Activated CD8-positive, alpha-beta T cell treated with anti-CD3 and anti-CD28 coated beads, Interleukin-2, amount 10 ng/mL, durations not matched to agents 7 days and 5 days (primary cell): ENCODE measurements at regions of chr17 and their contacts with region 1.

Region 1: DNA sequence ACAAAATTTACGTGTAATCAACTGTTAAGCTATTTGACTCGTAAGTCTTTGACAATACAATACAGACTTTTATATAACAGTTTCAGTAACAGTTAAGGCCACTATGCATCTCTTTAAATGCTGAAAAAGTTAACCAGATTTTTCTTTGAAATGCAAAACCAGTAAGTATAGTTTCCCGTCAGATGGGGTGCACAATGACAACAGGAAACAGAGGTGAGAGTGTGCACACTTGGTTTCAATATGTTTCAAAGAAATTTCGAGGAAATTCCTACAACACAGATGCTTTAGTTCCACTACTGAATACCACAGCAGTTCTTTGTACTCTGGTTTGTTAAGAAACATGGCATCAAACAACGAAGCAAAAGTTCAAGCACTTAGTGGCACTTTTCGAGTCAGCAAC is 48.4 kb downstream of the RNF157 start:
- DNase-seq: peak; percentile 78
- ATAC-seq: peak; percentile 85
- H3K4me3 Mint-ChIP-seq: peak overlapping the region; percentile 73
- H3K27ac Mint-ChIP-seq: peak overlapping the region; percentile 97
- H3K4me1 Mint-ChIP-seq: peaks cover 89% of the 10 kb centered on the region
- H3K27me3 Mint-ChIP-seq: no peaks in the 10 kb centered on the region

Region 2: GRCh38 chr17:76088036-76088867 is 103.6 kb before region 1 on chr17:
- CTCF ChIA-PET with region 1: no interaction called
- POLR2A ChIA-PET with region 1: no interaction called
- DNase-seq: no peak
- ATAC-seq: no peak
- H3K4me3 Mint-ChIP-seq: no peak overlapping the region
- H3K27ac Mint-ChIP-seq: no peak overlapping the region
- H3K4me1 Mint-ChIP-seq: peaks cover 2% of the 10 kb centered on the region
- H3K27me3 Mint-ChIP-seq: no peaks in the 10 kb centered on the region

Region 3: GRCh38 chr17:76141212-76142038 is 50.5 kb before region 1 on chr17 and contains the start of gene FOXJ1:
- CTCF ChIA-PET with region 1: interaction called, 6 read pairs
- POLR2A ChIA-PET with region 1: interaction called, 20 read pairs
- DNase-seq: peak; percentile 94
- ATAC-seq: peak; percentile 55
- H3K4me3 Mint-ChIP-seq: peak within 1 kb of the TSS; percentile 76
- H3K27ac Mint-ChIP-seq: peak within 1 kb of the TSS; percentile 97
- H3K4me1 Mint-ChIP-seq: peaks cover 72% of the 10 kb centered on the region
- H3K27me3 Mint-ChIP-seq: no peaks in the 10 kb centered on the region
- total RNA-seq, gene FOXJ1: 8.7 to 9.1 TPM

Region 4: GRCh38 chr17:76208120-76208519 is 16.2 kb after region 1 on chr17:
- CTCF ChIA-PET with region 1: interaction called, 12 read pairs
- POLR2A ChIA-PET with region 1: interaction called, 46 read pairs
- DNase-seq: peak; percentile 50
- ATAC-seq: peak; percentile 67
- H3K4me3 Mint-ChIP-seq: peak overlapping the region; percentile 15
- H3K27ac Mint-ChIP-seq: peak overlapping the region; percentile 74
- H3K4me1 Mint-ChIP-seq: peaks cover 75% of the 10 kb centered on the region
- H3K27me3 Mint-ChIP-seq: no peaks in the 10 kb centered on the region

Region 5: GRCh38 chr17:76246080-76247066 is 54.5 kb after region 1 on chr17:
- CTCF ChIA-PET with region 1: interaction called, 20 read pairs
- POLR2A ChIA-PET with region 1: interaction called, 66 read pairs
- DNase-seq: peak; percentile 91
- ATAC-seq: peak; percentile 97
- H3K4me3 Mint-ChIP-seq: peak overlapping the region; percentile 62
- H3K27ac Mint-ChIP-seq: peak overlapping the region; percentile 91
- H3K4me1 Mint-ChIP-seq: peaks cover 84% of the 10 kb centered on the region
- H3K27me3 Mint-ChIP-seq: no peaks in the 10 kb centered on the region

Region 6: GRCh38 chr17:76264755-76265596 is 73.1 kb after region 1 on chr17 and contains the start of gene UBALD2:
- CTCF ChIA-PET with region 1: interaction called, 35 read pairs
- POLR2A ChIA-PET with region 1: interaction called, 722 read pairs
- DNase-seq: peak; percentile 100
- ATAC-seq: peak; percentile 84
- H3K4me3 Mint-ChIP-seq: peak within 1 kb of the TSS; percentile 95
- H3K27ac Mint-ChIP-seq: peak within 1 kb of the TSS; percentile 99
- H3K4me1 Mint-ChIP-seq: peaks cover 58% of the 10 kb centered on the region
- H3K27me3 Mint-ChIP-seq: no peaks in the 10 kb centered on the region
- total RNA-seq, gene UBALD2: 318 to 359 TPM